Colonic mucosa (tissue), 4 donors: ENCODE measurements at regions of chr1 and their contacts with region 1.

Region 1: DNA sequence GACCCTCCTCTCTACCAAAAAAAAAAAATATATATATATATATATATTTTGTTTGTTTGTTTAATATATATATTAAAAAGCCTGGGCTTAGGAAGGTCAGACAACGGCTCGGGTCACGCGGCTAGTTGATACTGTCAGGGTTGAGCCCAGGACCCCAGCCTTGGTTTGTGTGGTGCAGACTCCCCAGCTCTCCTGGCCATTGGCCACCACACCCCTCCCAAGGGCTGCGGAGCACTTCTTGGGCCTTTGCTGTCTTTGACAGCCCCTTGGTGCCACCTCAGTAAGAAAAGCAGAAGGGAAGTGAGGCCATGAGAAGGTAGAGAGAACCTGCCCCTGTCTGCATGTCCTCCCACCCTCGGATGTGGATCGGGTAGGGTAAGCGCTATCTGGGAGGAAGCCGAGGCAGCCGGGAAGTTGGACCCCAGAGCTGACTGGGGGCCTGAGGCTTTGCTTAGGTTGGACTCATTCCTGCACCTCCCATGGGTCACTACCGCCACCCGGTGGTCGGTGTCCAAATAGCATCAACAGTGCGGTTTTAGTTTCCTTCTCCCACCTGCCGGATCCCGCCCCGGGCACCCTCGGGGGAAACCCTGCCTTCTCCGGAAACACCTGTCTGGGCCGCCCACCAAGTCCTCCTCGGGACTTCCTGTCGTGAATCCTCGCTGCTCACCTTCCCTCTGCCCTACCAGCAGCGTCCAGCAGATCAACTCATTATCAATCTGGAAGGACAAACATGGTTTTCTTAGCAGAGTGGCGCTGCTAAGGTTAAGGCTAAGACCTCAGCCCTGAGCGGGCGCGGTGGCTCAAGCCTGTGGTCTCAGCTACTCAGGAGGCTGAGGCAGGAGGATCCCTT is 29.8 kb upstream of the GNPAT start:
- DNase-seq: peak; percentile 96
- H3K4me3 ChIP-seq: peak overlapping the region; percentile 26
- H3K27ac ChIP-seq: peak overlapping the region; percentile 14
- H3K4me1 ChIP-seq: no peaks in the 10 kb centered on the region
- H3K27me3 ChIP-seq: no peaks in the 10 kb centered on the region
- CTCF ChIP-seq: peak; percentile 81

Region 2: GRCh38 chr1:230632273-230632873 is 578.9 kb before region 1 on chr1:
- intact Hi-C with region 1: loop called (anchors 10 kb)
- DNase-seq: peak; percentile 30
- H3K4me3 ChIP-seq: no peak overlapping the region
- H3K27ac ChIP-seq: no peak overlapping the region
- H3K4me1 ChIP-seq: no peaks in the 10 kb centered on the region
- H3K27me3 ChIP-seq: no peaks in the 10 kb centered on the region
- CTCF ChIP-seq: peak; percentile 50

Region 3: DNA sequence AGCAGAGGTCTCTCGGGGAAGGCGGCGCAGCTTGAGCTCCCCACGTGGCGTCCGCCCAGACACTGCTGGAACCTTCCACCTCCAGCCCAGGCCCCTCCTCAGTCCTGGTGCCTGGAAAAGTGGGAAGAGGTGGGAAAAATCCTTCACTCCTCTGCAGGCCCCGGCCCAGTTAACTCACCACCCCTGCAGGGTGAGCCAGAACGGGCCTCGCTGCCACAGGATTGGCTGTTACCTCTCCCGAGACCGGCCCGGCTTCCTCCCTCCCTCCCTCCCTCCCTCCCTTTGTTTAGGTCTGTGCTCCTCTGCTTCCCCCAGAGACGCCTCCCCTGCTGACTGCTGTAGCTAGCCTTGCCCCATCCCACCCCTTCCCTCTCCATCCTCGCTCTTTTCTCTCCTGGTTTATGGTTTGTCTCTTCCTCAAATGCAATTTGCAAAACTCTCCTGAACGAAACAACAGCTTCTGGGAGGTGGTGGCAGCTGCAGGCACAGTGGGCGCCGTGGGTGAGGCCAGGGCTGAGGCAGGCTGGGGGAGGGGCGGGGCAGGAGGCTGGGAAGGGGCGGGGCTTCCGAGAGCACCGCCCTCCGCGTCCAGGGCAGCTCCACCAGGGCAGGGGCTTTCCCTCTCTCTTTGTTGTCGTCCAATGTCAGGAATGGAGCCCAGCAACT is 457.5 kb before region 1 on chr1:
- intact Hi-C with region 1: no loop called
- DNase-seq: peak; percentile 72
- H3K4me3 ChIP-seq: no peak overlapping the region
- H3K27ac ChIP-seq: peak overlapping the region; percentile 78
- H3K4me1 ChIP-seq: peaks cover 8% of the 10 kb centered on the region
- H3K27me3 ChIP-seq: no peaks in the 10 kb centered on the region
- CTCF ChIP-seq: no peak

Region 4: GRCh38 chr1:230797942-230798418 is 413.3 kb before region 1 on chr1:
- intact Hi-C with region 1: loop called (anchors 5 kb)
- DNase-seq: peak; percentile 47
- H3K4me3 ChIP-seq: no peak overlapping the region
- H3K27ac ChIP-seq: no peak overlapping the region
- H3K4me1 ChIP-seq: no peaks in the 10 kb centered on the region
- H3K27me3 ChIP-seq: no peaks in the 10 kb centered on the region
- CTCF ChIP-seq: peak; percentile 33

Region 5: GRCh38 chr1:230917284-230918135 is 293.7 kb before region 1 on chr1:
- intact Hi-C with region 1: loop called (anchors 5 kb)
- DNase-seq: peak; percentile 90
- H3K4me3 ChIP-seq: no peak overlapping the region
- H3K27ac ChIP-seq: no peak overlapping the region
- H3K4me1 ChIP-seq: no peaks in the 10 kb centered on the region
- H3K27me3 ChIP-seq: no peaks in the 10 kb centered on the region
- CTCF ChIP-seq: peak; percentile 69

Region 6: DNA sequence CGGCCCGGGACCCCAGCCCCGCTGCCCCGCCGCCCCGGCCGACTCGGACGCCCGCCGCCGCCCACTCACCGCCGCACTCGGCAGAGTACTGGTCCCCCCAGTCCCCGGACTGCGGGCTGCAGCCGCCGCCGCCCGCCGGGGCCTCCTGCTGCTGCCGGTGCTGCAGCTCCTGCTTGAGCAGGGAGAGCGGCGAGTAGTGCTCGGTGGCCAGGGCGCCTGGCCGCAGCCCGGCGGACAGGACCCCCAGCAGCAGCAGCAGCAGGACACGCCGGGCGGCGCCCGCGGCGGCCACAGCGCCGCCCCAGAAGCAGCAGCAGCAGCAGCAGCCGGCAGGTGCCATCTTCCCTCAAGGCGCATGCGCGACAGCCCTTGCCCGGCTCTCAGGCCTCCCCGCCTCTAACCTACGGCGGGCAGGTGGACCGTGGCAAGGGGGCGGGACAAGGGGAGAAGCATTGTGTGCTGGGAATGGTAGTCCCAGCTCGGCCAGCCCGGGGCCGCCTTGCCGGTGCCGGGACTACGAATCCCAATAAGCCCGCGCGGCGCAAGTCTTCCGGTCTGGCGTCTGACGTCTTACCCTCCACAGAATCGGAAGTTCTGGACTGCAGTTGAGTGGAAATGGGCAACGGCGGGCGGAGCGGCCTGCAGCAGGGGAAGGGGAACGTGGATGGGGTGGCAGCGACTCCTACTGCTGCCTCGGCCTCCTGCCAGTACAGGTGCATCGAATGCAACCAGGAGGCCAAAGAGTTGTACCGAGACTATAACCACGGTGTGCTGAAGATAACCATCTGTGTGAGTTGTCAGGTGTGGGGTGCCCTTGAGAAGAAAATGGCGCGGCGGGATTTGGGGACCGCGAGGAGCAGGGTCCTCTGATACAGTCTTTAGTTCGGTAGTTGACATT is 232.5 kb before region 1 on chr1 and contains the starts of genes ARV1 and TTC13:
- intact Hi-C with region 1: loop called (anchors 5 kb)
- DNase-seq: peak; percentile 98
- H3K4me3 ChIP-seq: peak within 1 kb of the TSS; percentile 77
- H3K27ac ChIP-seq: peak within 1 kb of the TSS; percentile 76
- H3K4me1 ChIP-seq: peaks cover 9% of the 10 kb centered on the region
- H3K27me3 ChIP-seq: no peaks in the 10 kb centered on the region
- CTCF ChIP-seq: peak; percentile 26
- total RNA-seq, gene ARV1: 29.3 to 39.6 TPM
- total RNA-seq, gene TTC13: 28.0 to 47.0 TPM

Region 7: GRCh38 chr1:231139659-231140654 is 71.3 kb before region 1 on chr1:
- intact Hi-C with region 1: no loop called
- DNase-seq: no peak
- H3K4me3 ChIP-seq: no peak overlapping the region
- H3K27ac ChIP-seq: no peak overlapping the region
- H3K4me1 ChIP-seq: no peaks in the 10 kb centered on the region
- H3K27me3 ChIP-seq: no peaks in the 10 kb centered on the region
- CTCF ChIP-seq: no peak

Region 8: GRCh38 chr1:231236208-231236591 is 25.0 kb after region 1 on chr1:
- intact Hi-C with region 1: loop called (anchors 2 kb)
- DNase-seq: no peak
- H3K4me3 ChIP-seq: no peak overlapping the region
- H3K27ac ChIP-seq: peak overlapping the region; percentile 72
- H3K4me1 ChIP-seq: peaks cover 25% of the 10 kb centered on the region
- H3K27me3 ChIP-seq: no peaks in the 10 kb centered on the region
- CTCF ChIP-seq: no peak

Region 9: DNA sequence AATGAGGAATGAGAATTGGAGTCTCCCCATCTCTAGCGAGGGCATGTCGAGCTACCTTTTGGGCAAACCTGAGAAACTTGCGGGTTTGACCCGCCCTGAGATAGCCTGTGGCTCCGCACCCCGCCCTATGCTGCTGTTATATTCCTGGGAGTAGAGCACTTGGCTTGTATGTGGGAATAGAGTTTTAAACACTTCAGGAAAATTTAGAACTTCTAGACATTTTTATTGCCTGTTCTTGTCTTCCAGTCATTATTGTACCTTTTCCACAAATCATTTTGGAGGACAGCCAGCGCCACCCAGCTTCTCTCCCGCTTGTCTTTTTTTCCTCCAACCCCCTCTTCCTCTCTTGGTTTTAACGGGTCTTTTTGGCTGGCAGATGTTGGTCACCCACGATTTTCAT is 30.5 kb after region 1 on chr1:
- intact Hi-C with region 1: loop called (anchors 2 kb)
- DNase-seq: peak; percentile 69
- H3K4me3 ChIP-seq: peak overlapping the region; percentile 81
- H3K27ac ChIP-seq: peak overlapping the region; percentile 80
- H3K4me1 ChIP-seq: peaks cover 13% of the 10 kb centered on the region
- H3K27me3 ChIP-seq: no peaks in the 10 kb centered on the region
- CTCF ChIP-seq: no peak